GM23248 (cell line): ENCODE measurements at regions of chr3 and their contacts with region 1.

Region 1: DNA sequence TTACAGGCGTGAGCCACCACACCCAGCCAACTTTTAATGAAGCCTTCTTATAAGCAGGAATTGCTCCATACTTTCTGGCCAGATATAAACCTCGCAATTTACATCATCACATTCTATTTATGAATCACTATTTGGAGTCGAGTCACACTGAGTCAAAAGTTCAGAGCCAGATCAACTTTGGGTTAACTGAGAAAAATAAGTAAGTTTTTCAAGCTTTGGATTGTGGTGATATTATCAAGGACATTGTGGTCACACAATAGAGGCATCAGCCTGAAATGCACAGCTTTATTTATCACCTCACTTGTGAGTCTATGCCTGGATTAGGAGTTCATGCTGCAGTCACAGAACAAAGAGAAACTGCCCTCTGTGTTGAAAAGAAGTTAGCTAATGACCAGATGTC is 1163.5 kb downstream of the ROBO1 start:
- DNase-seq: peak; percentile 77
- H3K4me3 ChIP-seq: no peak overlapping the region
- H3K27ac ChIP-seq: peak overlapping the region; percentile 5; the same call in 1 of the 2 replicates
- H3K4me1 ChIP-seq: peaks cover 9% of the 10 kb centered on the region; the same call in 1 of the 2 replicates
- H3K27me3 ChIP-seq: no peaks in the 10 kb centered on the region

Region 2: DNA sequence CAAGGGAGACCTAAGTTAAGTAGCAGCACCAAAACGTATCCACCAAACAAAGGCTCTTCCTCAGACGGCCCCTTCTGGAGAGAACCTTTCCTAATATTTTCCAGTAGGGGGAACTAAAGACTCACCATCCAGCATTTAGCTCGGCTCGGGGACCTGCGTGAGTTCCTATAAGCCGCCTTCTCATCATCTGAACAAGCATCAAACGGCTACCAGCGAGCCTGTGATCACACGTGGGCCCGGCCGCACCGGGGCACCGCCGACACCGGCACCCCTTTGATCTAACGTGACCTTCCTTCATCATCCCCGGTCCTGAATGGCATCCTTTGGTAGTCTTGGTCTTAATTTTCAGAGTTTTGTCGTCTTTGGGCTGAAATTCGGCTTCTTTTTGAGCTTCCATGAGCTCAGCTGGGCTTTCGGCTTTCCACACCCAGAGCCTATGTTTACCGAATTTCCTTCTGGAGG is 1565.8 kb before region 1 on chr3:
- in situ Hi-C with region 1: loop called (anchors 25 kb)
- DNase-seq: peak; percentile 91
- H3K4me3 ChIP-seq: peak overlapping the region; percentile 66
- H3K27ac ChIP-seq: no peak overlapping the region
- H3K4me1 ChIP-seq: peaks cover 7% of the 10 kb centered on the region; the same call in 1 of the 2 replicates
- H3K27me3 ChIP-seq: peaks cover 56% of the 10 kb centered on the region

Region 3: DNA sequence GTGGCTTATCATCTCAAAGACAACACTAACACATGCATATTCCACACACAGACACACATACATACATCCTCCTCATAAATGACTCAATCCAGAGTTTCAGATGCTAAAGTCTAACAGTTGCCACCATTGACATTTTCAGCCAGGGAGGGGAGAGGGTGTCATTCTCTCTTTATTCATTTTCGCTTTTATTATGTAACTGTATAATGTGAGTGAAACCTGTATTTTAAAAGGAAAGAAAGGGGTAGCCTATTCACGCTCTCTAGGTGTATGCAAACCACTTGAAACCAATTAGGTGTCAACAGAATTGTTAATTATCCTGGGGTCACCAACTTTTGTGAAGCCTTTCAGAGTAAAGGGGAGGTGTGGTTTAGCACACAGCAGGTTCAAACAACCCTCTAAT is 281.6 kb before region 1 on chr3:
- in situ Hi-C with region 1: no loop called
- DNase-seq: no peak
- H3K4me3 ChIP-seq: no peak overlapping the region
- H3K27ac ChIP-seq: no peak overlapping the region
- H3K4me1 ChIP-seq: no peaks in the 10 kb centered on the region
- H3K27me3 ChIP-seq: no peaks in the 10 kb centered on the region

Region 4: DNA sequence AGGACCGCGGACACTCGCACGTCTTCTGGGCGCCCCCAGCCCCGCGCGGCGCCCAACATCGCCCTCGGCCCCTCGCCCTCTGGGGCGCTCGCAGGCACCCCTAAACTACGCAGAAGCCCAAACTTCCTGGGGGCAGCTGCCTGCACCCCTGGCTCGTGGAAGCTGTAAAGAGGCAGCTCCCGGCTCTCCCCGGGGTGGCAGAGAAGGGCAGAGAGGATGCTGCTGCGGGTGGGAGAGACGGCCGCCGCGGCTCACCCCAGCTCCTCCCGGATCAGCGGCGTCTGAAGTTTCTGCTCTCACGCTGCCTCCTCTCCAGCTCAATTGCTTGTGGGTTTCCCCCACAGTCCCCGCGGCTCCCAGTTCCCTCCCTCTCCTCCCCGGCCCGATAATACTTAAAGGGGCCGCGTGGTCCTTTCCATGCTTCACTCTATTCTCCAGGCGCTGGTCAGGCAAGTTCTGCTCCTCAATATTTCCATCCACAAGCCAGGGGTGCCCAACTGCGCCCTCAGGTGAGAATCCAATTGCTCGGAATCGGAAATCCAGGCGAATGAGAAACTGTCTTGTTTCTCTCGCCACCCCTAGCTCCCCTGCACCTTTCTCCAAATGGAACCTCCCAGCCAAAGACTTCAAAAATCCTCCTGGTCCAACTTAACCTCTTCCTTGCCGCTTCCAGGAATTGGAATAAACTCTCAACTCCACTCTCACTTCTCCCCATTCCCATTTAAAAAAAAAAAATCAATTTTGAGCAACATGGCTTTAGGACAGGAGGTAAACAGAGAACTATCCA is 415.0 kb after region 1 on chr3:
- in situ Hi-C with region 1: no loop called
- DNase-seq: peak; percentile 96
- H3K4me3 ChIP-seq: peak overlapping the region; percentile 99
- H3K27ac ChIP-seq: peak overlapping the region; percentile 93
- H3K4me1 ChIP-seq: peaks cover 20% of the 10 kb centered on the region
- H3K27me3 ChIP-seq: no peaks in the 10 kb centered on the region